ENCODE measurements at regions of chr1 and their contacts with region 1.

Region 1: DNA sequence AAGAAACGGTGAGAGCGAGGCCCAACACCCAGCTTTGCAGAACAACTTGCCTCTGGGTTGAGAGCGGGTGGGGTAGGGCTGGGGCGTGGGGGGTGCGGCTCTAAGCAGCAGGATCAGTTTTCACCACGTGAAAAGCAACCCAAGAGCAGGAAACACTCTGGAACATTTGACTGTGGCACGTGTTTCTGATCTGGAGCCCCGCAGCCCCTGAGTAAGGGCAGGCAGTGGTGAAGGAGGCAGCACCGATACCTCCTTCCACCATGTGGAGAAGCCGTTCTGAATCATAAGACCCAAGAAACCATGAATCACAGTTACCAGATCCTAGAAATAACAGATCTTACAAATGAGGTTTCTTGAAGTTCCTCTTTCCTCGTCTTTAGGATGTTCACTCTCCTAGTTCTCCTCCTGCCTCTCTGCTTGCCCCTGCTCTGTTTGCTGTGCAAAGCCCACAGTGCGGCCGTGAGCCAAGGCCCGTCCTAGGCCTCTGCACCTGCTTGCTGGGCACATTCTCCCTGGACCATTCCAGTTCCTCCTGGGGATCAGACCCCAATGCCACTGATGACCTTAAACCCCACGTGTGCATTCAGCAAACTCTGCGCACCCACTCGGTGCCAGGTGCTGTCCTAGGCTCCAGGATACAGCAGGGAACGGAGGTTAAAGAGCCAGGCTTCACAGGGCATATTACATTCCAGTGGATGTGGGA is 31.9 kb downstream of the SLC1A7 start:
- DNase-seq: no peak
- ATAC-seq: peak in 1 of 2 donors; percentile 15
- H3K4me3 ChIP-seq: no peak overlapping the region
- H3K27ac ChIP-seq: no peak overlapping the region
- H3K4me1 ChIP-seq: no peaks in the 10 kb centered on the region
- H3K27me3 ChIP-seq: no peaks in the 10 kb centered on the region

Region 2: GRCh38 chr1:52996653-52997052 is 113.9 kb before region 1 on chr1:
- intact Hi-C with region 1: no loop called
- DNase-seq: no peak
- ATAC-seq: no peak
- H3K4me3 ChIP-seq: no peak overlapping the region
- H3K27ac ChIP-seq: no peak overlapping the region
- H3K4me1 ChIP-seq: no peaks in the 10 kb centered on the region
- H3K27me3 ChIP-seq: no peaks in the 10 kb centered on the region

Region 3: DNA sequence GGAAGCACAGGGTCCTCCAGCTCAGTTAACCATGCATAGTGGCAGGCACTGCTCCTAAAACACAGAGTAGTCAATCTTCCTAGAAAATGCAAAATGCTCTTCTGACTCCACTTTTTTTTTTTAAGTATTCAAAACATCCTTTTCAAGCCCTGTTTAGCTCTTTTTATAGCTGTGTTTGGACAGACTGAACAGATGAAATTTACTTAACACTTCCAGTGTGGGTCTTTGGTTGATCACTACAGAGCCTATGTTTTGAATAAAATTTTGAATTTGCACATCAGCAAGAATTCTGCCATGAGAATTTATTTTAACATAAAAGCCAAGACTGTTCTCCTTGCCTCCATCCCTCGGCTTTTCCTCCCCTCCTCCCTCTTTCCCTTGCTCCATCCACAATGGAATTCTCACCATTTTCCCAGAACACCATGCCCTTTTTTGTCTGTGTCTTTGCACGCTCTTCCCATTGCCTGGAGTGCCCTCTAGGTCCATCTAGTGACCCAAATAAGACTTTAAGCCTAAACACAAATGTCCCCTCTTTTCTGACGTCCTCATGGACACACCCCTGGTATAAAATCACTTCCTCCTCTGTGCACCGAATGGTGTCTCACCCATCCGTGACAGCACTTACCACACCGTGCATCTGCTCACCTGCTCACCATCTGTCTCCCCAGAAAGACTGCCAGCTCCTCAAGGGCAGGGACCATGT is 62.1 kb after region 1 on chr1:
- intact Hi-C with region 1: loop called in 1 of 4 experiments (anchors 10 kb)
- DNase-seq: no peak
- ATAC-seq: peak; percentile 23 to 25
- H3K4me3 ChIP-seq: no peak overlapping the region
- H3K27ac ChIP-seq: no peak overlapping the region
- H3K4me1 ChIP-seq: peaks cover 3% of the 10 kb centered on the region
- H3K27me3 ChIP-seq: no peaks in the 10 kb centered on the region

Region 4: DNA sequence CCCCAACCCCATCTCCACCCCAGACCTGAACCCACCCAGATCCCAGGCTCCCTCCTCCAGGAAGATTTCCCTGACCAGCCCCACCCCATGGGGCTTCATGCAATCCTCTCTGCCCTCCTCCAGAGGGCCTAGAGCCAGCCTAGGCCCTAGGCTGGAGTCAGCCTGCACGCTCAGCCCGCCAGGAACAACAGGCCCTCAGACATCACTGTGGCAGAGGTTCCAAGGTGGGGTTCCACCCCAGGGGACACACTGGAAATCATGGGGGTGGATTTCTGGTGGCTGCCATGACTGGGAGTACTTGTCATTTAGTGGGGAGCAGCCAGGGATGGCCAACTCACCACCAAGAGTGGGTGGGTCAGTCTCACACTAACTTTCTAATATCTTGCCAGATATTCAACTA is 506.4 kb after region 1 on chr1:
- intact Hi-C with region 1: no loop called
- DNase-seq: peak in 1 of 3 donors; percentile 40
- ATAC-seq: no peak
- H3K4me3 ChIP-seq: no peak overlapping the region
- H3K27ac ChIP-seq: no peak overlapping the region
- H3K4me1 ChIP-seq: no peaks in the 10 kb centered on the region
- H3K27me3 ChIP-seq: no peaks in the 10 kb centered on the region

Measured in right cardiac atrium (tissue), 5 donors.